Sigmoid colon (tissue), 7 donors: ENCODE measurements at regions of chr20 and their contacts with region 1.

Region 1: DNA sequence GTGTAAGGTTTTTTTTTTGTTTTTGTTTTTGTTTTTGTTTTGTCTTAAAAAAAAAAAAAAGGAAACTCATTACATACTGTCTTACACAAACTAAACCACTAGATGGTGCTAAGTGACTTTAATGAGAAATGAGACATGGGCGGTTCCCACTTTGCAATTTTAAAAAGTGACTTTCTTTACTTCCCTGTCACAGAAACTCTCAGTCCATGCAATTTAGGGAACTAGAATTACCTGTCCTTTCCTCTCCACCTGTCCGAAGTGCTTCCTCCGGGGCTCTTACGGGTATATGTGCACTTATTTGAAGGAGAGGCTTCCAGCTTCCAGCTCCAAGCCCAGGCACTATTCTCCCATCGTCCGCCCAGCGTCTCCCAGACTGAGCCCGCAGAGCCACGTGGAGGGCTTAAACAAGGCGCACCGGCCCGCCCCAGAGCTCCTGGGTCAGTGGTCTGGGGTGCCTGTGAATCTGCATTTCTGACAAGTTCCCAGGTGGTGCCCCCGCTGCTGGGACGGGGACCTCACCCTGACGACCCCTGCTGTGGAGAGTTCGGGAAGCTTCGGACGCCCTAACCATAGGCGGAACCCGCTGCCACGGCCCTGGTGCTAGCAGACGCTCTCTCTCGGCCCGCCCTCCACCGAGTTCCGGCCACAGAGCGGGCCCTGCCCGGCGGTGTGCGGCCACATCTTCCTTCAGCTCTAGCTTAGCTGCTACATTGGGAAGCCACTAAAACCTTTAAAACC is 26.1 kb downstream of the BFSP1 start:
- DNase-seq: peak; percentile 78
- H3K4me3 ChIP-seq: peak overlapping the region; percentile 18 to 54 (median 48)
- H3K27ac ChIP-seq: peak overlapping the region; percentile 3 to 61 (median 32)
- H3K4me1 ChIP-seq: peaks cover 0 to 10% (median 8%) of the 10 kb centered on the region in 4 donors
- H3K27me3 ChIP-seq: no peaks in the 10 kb centered on the region
- CTCF ChIP-seq: peak; percentile 54 to 77 (median 74)
- EP300 ChIP-seq: no peak
- POLR2A ChIP-seq: no peak

Region 2: DNA sequence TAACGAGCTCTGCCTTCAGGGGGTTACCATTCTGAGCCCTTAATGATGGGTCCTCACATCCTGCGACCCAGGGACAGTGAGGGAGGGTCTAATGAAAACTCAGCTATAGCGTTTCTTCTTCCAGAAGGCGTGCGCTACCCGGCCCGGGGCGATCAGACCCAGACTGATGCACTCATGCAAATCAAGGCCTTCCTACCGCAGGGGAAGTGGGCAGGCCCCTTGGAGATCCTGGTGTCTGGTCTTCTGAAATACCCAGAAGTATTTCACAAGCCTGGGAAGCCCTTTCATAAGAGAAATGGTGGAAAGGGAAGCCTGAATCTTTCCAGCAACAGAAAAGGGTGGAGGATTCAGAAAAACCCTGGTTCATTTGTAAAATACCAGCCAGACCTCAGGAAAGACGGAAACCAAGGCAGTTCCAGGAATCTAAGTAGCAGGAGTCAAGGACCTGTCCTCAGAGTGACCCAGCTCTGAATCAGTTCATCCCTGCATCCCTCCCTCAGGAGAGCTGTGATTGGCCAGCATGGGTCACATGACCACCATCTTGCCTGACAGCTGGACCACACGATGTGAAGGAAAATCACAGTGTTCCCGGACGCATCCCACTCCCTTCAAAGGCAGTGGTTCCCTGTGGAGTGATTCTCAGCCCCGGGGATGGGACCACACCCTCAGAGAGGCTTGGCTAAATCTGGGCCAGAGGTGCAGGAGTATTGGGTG is 13.4 kb after region 1 on chr20:
- intact Hi-C with region 1: no loop called
- DNase-seq: peak; percentile 43
- H3K4me3 ChIP-seq: no peak overlapping the region
- H3K27ac ChIP-seq: no peak overlapping the region
- H3K4me1 ChIP-seq: no peaks in the 10 kb centered on the region
- H3K27me3 ChIP-seq: no peaks in the 10 kb centered on the region
- CTCF ChIP-seq: no peak
- EP300 ChIP-seq: no peak
- POLR2A ChIP-seq: no peak

Region 3: GRCh38 chr20:17530716-17531664 is 25.9 kb after region 1 on chr20 and contains the start of gene BFSP1:
- intact Hi-C with region 1: loop called (anchors 2 kb)
- DNase-seq: no peak
- H3K4me3 ChIP-seq: peak within 1 kb of the TSS; percentile 37 to 66 (median 62)
- H3K27ac ChIP-seq: peak within 1 kb of the TSS; percentile 77 to 92 (median 86)
- H3K4me1 ChIP-seq: peaks cover 0 to 24% (median 13%) of the 10 kb centered on the region in 4 donors
- H3K27me3 ChIP-seq: no peaks in the 10 kb centered on the region
- CTCF ChIP-seq: no peak
- EP300 ChIP-seq: no peak
- POLR2A ChIP-seq: no peak
- total RNA-seq, gene BFSP1: 1.1 to 3.6 (median 1.5) TPM

Region 4: GRCh38 chr20:17589161-17589834 is 84.2 kb after region 1 on chr20:
- intact Hi-C with region 1: no loop called
- DNase-seq: no peak
- H3K4me3 ChIP-seq: peak overlapping the region in 3 of 4 donors; percentile 11 to 30 (median 22)
- H3K27ac ChIP-seq: peak overlapping the region; percentile 65 to 100 (median 88)
- H3K4me1 ChIP-seq: peaks cover 0 to 100% (median 97%) of the 10 kb centered on the region in 4 donors
- H3K27me3 ChIP-seq: no peaks in the 10 kb centered on the region
- CTCF ChIP-seq: no peak
- EP300 ChIP-seq: no peak
- POLR2A ChIP-seq: no peak

Region 5: GRCh38 chr20:17617551-17618223 is 112.6 kb after region 1 on chr20:
- intact Hi-C with region 1: loop called (anchors 1 kb)
- DNase-seq: peak; percentile 87
- H3K4me3 ChIP-seq: no peak overlapping the region
- H3K27ac ChIP-seq: peak overlapping the region in 2 of 4 donors; percentile 25 to 99
- H3K4me1 ChIP-seq: peaks cover 0 to 47% (median 45%) of the 10 kb centered on the region in 4 donors
- H3K27me3 ChIP-seq: no peaks in the 10 kb centered on the region
- CTCF ChIP-seq: peak; percentile 75 to 97 (median 89)
- EP300 ChIP-seq: no peak
- POLR2A ChIP-seq: no peak

Region 6: DNA sequence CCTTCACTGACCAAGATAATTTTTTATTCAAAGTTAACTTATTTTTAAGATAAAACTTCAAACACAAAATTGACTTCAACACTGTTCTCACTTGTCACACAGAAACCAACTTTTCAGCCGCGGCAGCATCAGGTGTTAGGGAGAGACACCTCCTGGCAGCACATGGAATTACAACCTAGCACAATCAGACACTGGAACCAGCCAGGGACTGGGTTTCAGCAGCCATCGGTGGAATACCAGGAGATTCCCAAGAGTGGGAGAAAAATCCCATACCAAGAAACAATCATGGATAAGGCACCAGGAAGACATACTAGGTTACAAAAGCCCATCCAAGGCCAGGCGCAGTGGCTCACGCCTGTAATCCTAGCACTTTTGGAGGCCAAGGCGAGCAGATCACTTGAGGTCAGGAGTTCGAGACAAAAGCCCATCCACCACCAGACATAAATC is 393.5 kb after region 1 on chr20:
- intact Hi-C with region 1: loop called (anchors 2 kb)
- DNase-seq: peak; percentile 90
- H3K4me3 ChIP-seq: no peak overlapping the region
- H3K27ac ChIP-seq: no peak overlapping the region
- H3K4me1 ChIP-seq: peaks cover 0 to 25% (median 16%) of the 10 kb centered on the region in 4 donors
- H3K27me3 ChIP-seq: no peaks in the 10 kb centered on the region
- CTCF ChIP-seq: peak; percentile 77 to 97 (median 95)
- EP300 ChIP-seq: no peak
- POLR2A ChIP-seq: no peak

Region 7: GRCh38 chr20:17995967-17996819 is 491.1 kb after region 1 on chr20:
- intact Hi-C with region 1: loop called (anchors 10 kb)
- DNase-seq: no peak
- H3K4me3 ChIP-seq: no peak overlapping the region
- H3K27ac ChIP-seq: no peak overlapping the region
- H3K4me1 ChIP-seq: peaks cover 0 to 13% (median 5%) of the 10 kb centered on the region in 4 donors
- H3K27me3 ChIP-seq: no peaks in the 10 kb centered on the region
- CTCF ChIP-seq: peak; percentile 83 to 97 (median 96)
- EP300 ChIP-seq: no peak
- POLR2A ChIP-seq: no peak

Region 8: GRCh38 chr20:18137412-18138265 is 632.6 kb after region 1 on chr20 and contains the starts of genes KAT14 and PET117:
- intact Hi-C with region 1: loop called (anchors 10 kb)
- DNase-seq: peak; percentile 93
- H3K4me3 ChIP-seq: peak within 1 kb of the TSS; percentile 62 to 83 (median 78)
- H3K27ac ChIP-seq: peak within 1 kb of the TSS; percentile 91 to 93 (median 92)
- H3K4me1 ChIP-seq: peaks cover 0 to 37% (median 30%) of the 10 kb centered on the region in 4 donors
- H3K27me3 ChIP-seq: no peaks in the 10 kb centered on the region
- CTCF ChIP-seq: no peak
- EP300 ChIP-seq: no peak
- POLR2A ChIP-seq: peak; percentile 38 to 47
- total RNA-seq, gene KAT14: 12.6 to 21.7 (median 17.9) TPM
- total RNA-seq, gene PET117: 7.8 to 18.8 (median 16.9) TPM

Region 9: DNA sequence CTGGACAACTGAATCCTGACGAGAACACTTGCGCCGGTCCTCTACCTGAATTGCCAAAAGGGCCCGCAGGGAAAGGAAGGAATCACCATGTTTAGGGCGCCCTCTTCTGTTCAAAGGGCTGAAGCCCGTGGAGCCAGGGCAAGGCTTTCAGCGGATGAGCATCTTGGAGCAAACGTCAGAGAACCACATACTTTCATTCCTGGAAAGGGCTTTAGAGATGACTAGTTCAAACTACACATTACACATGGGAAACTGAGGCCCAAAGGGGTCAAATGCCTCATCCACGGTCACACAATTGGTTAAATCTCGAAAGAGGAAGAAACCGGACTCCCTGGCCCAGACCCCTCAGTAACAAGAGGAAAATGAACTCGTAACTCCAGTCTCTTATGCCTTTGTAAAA is 771.8 kb after region 1 on chr20:
- intact Hi-C with region 1: loop called (anchors 5 kb)
- DNase-seq: no peak
- H3K4me3 ChIP-seq: no peak overlapping the region
- H3K27ac ChIP-seq: no peak overlapping the region
- H3K4me1 ChIP-seq: no peaks in the 10 kb centered on the region
- H3K27me3 ChIP-seq: peaks cover 0 to 27% (median 0%) of the 10 kb centered on the region in 3 donors
- CTCF ChIP-seq: peak in 3 of 4 experiments; percentile 22 to 38 (median 32)
- EP300 ChIP-seq: no peak
- POLR2A ChIP-seq: no peak